Panc1 (cell line): ENCODE measurements at regions of chr6 and their contacts with region 1.

Region 1: DNA sequence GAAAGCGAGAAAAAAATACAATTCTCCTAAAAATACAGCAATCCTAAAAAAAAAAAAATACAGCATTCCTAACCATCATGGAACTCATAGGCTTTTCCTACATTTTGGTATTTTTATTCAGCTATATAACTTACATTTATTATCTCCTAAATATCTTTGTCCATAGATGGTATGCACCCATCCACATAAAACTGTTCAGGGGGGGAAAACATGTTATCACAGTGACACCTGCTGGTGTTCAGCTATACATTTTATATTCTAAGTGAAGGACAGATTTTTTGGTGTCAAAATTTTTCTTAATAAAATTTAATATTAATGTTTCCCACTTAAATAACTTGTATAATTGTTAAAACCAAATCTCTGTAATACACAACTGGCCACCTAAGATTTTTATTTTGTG is 58.0 kb downstream of the BLOC1S5 start:
- DNase-seq: no peak
- ATAC-seq: no peak
- H3K4me3 ChIP-seq: no peak overlapping the region
- H3K27ac ChIP-seq: no peak overlapping the region
- H3K4me1 ChIP-seq: no peaks in the 10 kb centered on the region
- H3K27me3 ChIP-seq: no peaks in the 10 kb centered on the region
- CTCF ChIP-seq: peak; percentile 51; the same call in 1 of the 2 replicates

Region 2: DNA sequence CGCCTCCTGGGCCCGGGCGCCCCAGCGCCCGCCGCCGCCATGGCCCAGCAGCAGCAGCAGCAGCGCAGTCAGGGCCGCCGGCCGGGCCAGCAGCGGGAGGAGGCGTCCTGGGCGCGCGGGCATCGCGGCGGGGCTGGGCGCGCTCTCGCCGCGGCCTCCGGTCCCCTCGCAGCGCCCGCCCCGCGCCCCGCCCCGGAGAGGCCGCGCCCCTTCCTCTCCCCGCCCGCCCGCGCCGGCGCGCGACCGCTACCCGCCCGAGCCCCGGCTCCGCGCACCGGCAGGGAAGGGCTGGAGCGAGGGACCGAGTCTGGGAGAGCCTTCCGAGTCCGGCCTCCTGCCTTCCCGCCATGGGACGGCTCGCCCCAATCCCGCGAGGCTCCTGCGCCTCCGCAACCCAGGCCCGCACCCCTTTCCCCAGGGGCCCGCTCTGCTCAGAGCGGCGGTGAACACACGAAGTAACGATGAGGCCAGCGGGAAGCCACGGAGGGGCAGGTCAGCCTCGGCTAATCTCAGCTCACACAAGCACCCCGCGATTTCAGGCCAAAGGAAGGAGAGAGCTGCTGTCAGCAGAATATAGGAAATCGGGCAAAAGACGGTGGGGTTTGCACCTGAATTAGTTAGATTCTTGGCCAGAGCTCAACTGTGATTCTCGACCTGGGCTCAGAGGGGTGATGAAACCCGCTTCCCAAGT is 95.4 kb before region 1 on chr6 and contains the start of gene TXNDC5:
- CTCF ChIA-PET with region 1: no interaction called
- POLR2A ChIA-PET with region 1: interaction called, 3 read pairs
- in situ Hi-C with region 1: no loop called
- intact Hi-C with region 1: loop called (anchors 2 kb)
- DNase-seq: no peak
- ATAC-seq: peak; percentile 91
- H3K4me3 ChIP-seq: peak within 1 kb of the TSS; percentile 66 to 75
- H3K27ac ChIP-seq: peak within 1 kb of the TSS; percentile 92
- H3K4me1 ChIP-seq: peaks cover 13% of the 10 kb centered on the region
- H3K27me3 ChIP-seq: 0 out of 2 replicates have a peak, but pooled peaks cover 2% of the 10 kb centered on the region
- CTCF ChIP-seq: no peak
- total RNA-seq, gene TXNDC5: 177 TPM

Region 3: GRCh38 chr6:7960848-7961247 is 45.4 kb before region 1 on chr6:
- CTCF ChIA-PET with region 1: no interaction called
- POLR2A ChIA-PET with region 1: no interaction called
- in situ Hi-C with region 1: no loop called
- intact Hi-C with region 1: no loop called
- DNase-seq: no peak
- ATAC-seq: no peak
- H3K4me3 ChIP-seq: no peak overlapping the region
- H3K27ac ChIP-seq: no peak overlapping the region
- H3K4me1 ChIP-seq: no peaks in the 10 kb centered on the region
- H3K27me3 ChIP-seq: no peaks in the 10 kb centered on the region
- CTCF ChIP-seq: no peak